Activated CD4-positive, alpha-beta T cell treated with anti-CD3 and anti-CD28 coated beads for 36 hours (primary cell): ENCODE measurements at regions of chr16 and their contacts with region 1.

Region 1: GRCh38 chr16:89720813-89721545 is at the starts of genes VPS9D1 and ZNF276:
- DNase-seq: peak; percentile 92
- ATAC-seq: peak; percentile 49
- H3K4me3 Mint-ChIP-seq: peak within 1 kb of the TSS; percentile 85
- H3K27ac Mint-ChIP-seq: peak within 1 kb of the TSS; percentile 84
- H3K4me1 Mint-ChIP-seq: peaks cover 40% of the 10 kb centered on the region
- H3K27me3 Mint-ChIP-seq: no peaks in the 10 kb centered on the region
- total RNA-seq, gene VPS9D1: 2.0 to 2.6 TPM
- total RNA-seq, gene ZNF276: 21.3 to 24.8 TPM

Region 2: GRCh38 chr16:89560378-89561141 is 160.4 kb before region 1 on chr16 and contains the start of gene RPL13:
- CTCF ChIA-PET with region 1: no interaction called
- POLR2A ChIA-PET with region 1: no interaction called
- intact Hi-C with region 1: loop called in 1 of 2 experiments (anchors 1 kb)
- DNase-seq: peak; percentile 97
- ATAC-seq: peak; percentile 90
- H3K4me3 Mint-ChIP-seq: peak within 1 kb of the TSS; percentile 95
- H3K27ac Mint-ChIP-seq: peak within 1 kb of the TSS; percentile 99
- H3K4me1 Mint-ChIP-seq: peaks cover 46% of the 10 kb centered on the region
- H3K27me3 Mint-ChIP-seq: no peaks in the 10 kb centered on the region
- total RNA-seq, gene RPL13: 2,518 to 3,038 TPM

Region 3: GRCh38 chr16:89686520-89687091 is 34.4 kb before region 1 on chr16 and contains the start of gene CDK10:
- CTCF ChIA-PET with region 1: no interaction called
- POLR2A ChIA-PET with region 1: no interaction called
- intact Hi-C with region 1: loop called in 1 of 2 experiments (anchors 1 kb)
- DNase-seq: peak; percentile 92
- ATAC-seq: peak; percentile 90
- H3K4me3 Mint-ChIP-seq: peak within 1 kb of the TSS; percentile 86
- H3K27ac Mint-ChIP-seq: peak within 1 kb of the TSS; percentile 88
- H3K4me1 Mint-ChIP-seq: peaks cover 14% of the 10 kb centered on the region
- H3K27me3 Mint-ChIP-seq: no peaks in the 10 kb centered on the region
- total RNA-seq, gene CDK10: 78.1 to 89.8 TPM

Region 4: DNA sequence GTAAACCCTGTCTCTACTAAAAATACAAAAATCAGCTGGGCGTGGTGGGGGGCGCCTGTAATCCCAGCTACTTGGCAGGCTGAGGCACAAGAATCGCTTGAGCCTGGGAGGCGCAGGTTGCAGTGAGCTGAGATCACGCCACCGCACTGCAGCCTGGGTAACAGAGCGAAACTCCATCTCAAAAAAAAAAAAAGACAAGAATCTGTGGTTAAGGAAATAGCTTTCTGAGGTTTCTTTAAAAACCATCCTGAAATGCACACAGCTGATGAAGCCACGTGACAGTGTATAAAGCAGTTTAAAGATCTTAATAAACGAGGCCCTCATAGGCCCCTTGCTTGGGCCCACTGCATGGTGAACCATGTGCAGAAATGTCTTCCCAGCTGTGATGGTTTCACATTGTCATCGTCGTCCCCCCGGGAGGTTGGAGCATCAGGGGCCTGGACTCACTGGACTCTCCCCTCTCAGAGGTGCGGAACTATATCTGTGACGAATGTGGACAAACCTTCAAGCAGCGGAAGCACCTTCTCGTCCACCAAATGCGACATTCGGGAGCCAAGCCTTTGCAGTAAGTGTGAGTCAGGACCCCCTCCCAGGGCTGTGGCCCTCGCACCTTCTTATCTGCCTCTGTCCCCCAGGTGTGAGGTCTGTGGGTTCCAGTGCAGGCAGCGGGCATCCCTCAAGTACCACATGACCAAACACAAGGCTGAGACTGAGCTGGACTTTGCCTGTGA is 16.5 kb after region 1 on chr16:
- CTCF ChIA-PET with region 1: interaction called, 3 read pairs
- POLR2A ChIA-PET with region 1: interaction called, 4 read pairs
- intact Hi-C with region 1: loop called in 1 of 2 experiments (anchors 1 kb)
- DNase-seq: peak; percentile 66
- ATAC-seq: peak; percentile 58
- H3K4me3 Mint-ChIP-seq: no peak overlapping the region
- H3K27ac Mint-ChIP-seq: peak overlapping the region; percentile 67
- H3K4me1 Mint-ChIP-seq: peaks cover 25% of the 10 kb centered on the region
- H3K27me3 Mint-ChIP-seq: no peaks in the 10 kb centered on the region

Region 5: DNA sequence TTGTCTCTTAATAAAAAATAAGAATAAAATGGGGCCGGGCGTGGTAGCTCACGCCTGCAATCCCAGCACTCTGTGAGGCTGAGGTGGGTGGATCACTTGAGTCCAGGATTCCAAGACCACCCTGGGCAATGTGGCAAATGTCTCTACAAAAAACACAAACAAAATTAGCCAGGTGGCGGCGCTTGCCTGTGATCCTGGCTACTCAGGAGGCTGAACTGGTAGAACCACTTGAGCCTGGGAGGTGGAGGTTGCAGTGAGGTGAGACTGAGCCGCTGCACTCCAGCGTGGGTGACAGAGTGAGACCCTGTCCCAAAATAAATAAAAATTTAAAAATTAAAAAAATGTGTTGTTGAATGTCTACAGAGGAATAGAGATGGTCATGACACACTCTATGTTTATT is 224.7 kb after region 1 on chr16:
- CTCF ChIA-PET with region 1: interaction called, 3 read pairs
- POLR2A ChIA-PET with region 1: no interaction called
- intact Hi-C with region 1: loop called in 1 of 2 experiments (anchors 1 kb)
- DNase-seq: no peak
- ATAC-seq: no peak
- H3K4me3 Mint-ChIP-seq: no peak overlapping the region
- H3K27ac Mint-ChIP-seq: no peak overlapping the region
- H3K4me1 Mint-ChIP-seq: no peaks in the 10 kb centered on the region
- H3K27me3 Mint-ChIP-seq: peaks cover 20% of the 10 kb centered on the region